ENCODE measurements at regions of chr15 and their contacts with region 1.

Region 1: GRCh38 chr15:92020765-92021164 is 167.3 kb downstream of the SLCO3A1 start:
- DNase-seq: no peak
- ATAC-seq: no peak
- H3K4me3 ChIP-seq: no peak overlapping the region
- H3K27ac ChIP-seq: no peak overlapping the region
- H3K4me1 ChIP-seq: peaks cover 21% of the 10 kb centered on the region
- H3K27me3 ChIP-seq: no peaks in the 10 kb centered on the region

Region 2: GRCh38 chr15:91970142-91970541 is 50.6 kb before region 1 on chr15:
- intact Hi-C with region 1: loop called in 1 of 4 experiments (anchors 10 kb)
- DNase-seq: peak; percentile 84 to 95 (median 93)
- ATAC-seq: peak; percentile 79 to 90
- H3K4me3 ChIP-seq: no peak overlapping the region
- H3K27ac ChIP-seq: peak overlapping the region; percentile 70
- H3K4me1 ChIP-seq: peaks cover 43% of the 10 kb centered on the region
- H3K27me3 ChIP-seq: no peaks in the 10 kb centered on the region